MCF 10A (cell line): ENCODE measurements at regions of chr5 and their contacts with region 1.

Region 1: DNA sequence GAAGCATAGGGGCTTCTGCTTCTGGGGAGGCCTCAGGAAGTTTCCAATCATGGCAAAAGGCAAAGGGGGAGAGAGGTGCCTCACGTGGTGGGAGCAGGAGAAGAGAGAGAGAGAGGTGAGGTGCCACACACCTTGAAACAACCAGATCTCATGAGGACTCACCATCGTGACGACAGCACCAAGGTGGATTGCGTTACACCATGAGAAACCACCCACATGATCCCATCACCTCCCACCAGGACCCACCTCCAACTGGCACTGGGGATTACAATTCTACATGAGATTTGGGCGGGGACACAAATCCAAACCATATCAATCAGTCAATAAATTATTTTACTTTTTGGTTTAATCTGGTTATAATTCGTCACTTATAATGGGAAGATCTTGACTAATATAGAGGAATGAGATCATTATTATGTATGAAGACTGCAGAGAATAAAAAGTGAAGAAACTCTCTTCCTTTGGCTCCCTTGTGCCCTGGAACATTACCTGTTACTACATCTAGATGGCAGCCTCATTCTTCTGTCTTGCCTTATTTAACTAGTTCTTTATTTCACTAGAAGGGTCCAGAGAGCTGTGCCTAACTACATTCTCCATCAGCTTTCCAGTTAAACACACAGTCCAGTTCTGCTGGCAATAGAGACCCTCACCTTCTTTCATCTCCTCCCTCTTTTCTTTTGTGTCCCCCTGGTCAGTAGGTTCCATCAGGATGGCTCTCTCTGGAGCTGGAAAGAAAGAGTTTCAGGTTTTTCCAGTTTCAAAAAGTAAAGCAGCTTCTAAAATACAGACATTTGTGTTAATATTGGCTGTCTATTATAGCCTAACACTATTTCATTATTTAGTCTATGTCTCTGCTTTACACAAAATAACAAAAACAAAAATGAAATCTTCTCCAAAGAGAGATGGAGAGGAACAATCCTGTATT is 21.7 kb upstream of the SPINK7 start:
- DNase-seq: peak; percentile 51
- H3K4me3 Mint-ChIP-seq: no peak overlapping the region
- H3K27ac Mint-ChIP-seq: no peak overlapping the region
- H3K4me1 Mint-ChIP-seq: no peaks in the 10 kb centered on the region
- H3K27me3 Mint-ChIP-seq: no peaks in the 10 kb centered on the region
- CTCF ChIP-seq: peak; percentile 71

Region 2: GRCh38 chr5:148237785-148238184 is 52.7 kb before region 1 on chr5:
- CTCF ChIA-PET with region 1: no interaction called
- POLR2A ChIA-PET with region 1: no interaction called
- intact Hi-C with region 1: no loop called
- DNase-seq: no peak
- H3K4me3 Mint-ChIP-seq: no peak overlapping the region
- H3K27ac Mint-ChIP-seq: no peak overlapping the region
- H3K4me1 Mint-ChIP-seq: no peaks in the 10 kb centered on the region
- H3K27me3 Mint-ChIP-seq: no peaks in the 10 kb centered on the region
- CTCF ChIP-seq: no peak

Region 3: GRCh38 chr5:148268556-148268955 is 22.0 kb before region 1 on chr5 and contains the start of gene SPINK13:
- CTCF ChIA-PET with region 1: interaction called, 12 read pairs
- POLR2A ChIA-PET with region 1: no interaction called
- intact Hi-C with region 1: no loop called
- DNase-seq: peak; percentile 84
- H3K4me3 Mint-ChIP-seq: no peak within 1 kb of the TSS
- H3K27ac Mint-ChIP-seq: peak within 1 kb of the TSS; percentile 37
- H3K4me1 Mint-ChIP-seq: peaks cover 16% of the 10 kb centered on the region
- H3K27me3 Mint-ChIP-seq: no peaks in the 10 kb centered on the region
- CTCF ChIP-seq: no peak
- total RNA-seq, gene SPINK13: not detected in 2 replicates

Region 4: GRCh38 chr5:148306446-148306845 is 15.9 kb after region 1 on chr5:
- CTCF ChIA-PET with region 1: interaction called, 13 read pairs
- POLR2A ChIA-PET with region 1: no interaction called
- intact Hi-C with region 1: no loop called
- DNase-seq: peak; percentile 7
- H3K4me3 Mint-ChIP-seq: no peak overlapping the region
- H3K27ac Mint-ChIP-seq: no peak overlapping the region
- H3K4me1 Mint-ChIP-seq: no peaks in the 10 kb centered on the region
- H3K27me3 Mint-ChIP-seq: no peaks in the 10 kb centered on the region
- CTCF ChIP-seq: no peak

Region 5: GRCh38 chr5:148314204-148314603 is 23.7 kb after region 1 on chr5:
- CTCF ChIA-PET with region 1: interaction called, 15 read pairs
- POLR2A ChIA-PET with region 1: no interaction called
- intact Hi-C with region 1: no loop called
- DNase-seq: peak; percentile 53
- H3K4me3 Mint-ChIP-seq: no peak overlapping the region
- H3K27ac Mint-ChIP-seq: no peak overlapping the region
- H3K4me1 Mint-ChIP-seq: no peaks in the 10 kb centered on the region
- H3K27me3 Mint-ChIP-seq: no peaks in the 10 kb centered on the region
- CTCF ChIP-seq: peak; percentile 40

Region 6: GRCh38 chr5:148353634-148354033 is 63.1 kb after region 1 on chr5:
- CTCF ChIA-PET with region 1: interaction called, 9 read pairs
- POLR2A ChIA-PET with region 1: no interaction called
- intact Hi-C with region 1: loop called (anchors 2 kb)
- DNase-seq: peak; percentile 14
- H3K4me3 Mint-ChIP-seq: no peak overlapping the region
- H3K27ac Mint-ChIP-seq: no peak overlapping the region
- H3K4me1 Mint-ChIP-seq: no peaks in the 10 kb centered on the region
- H3K27me3 Mint-ChIP-seq: no peaks in the 10 kb centered on the region
- CTCF ChIP-seq: peak; percentile 29